Naive thymus-derived CD4-positive, alpha-beta T cell (primary cell): ENCODE measurements at regions of chr17 and their contacts with region 1.

Region 1: GRCh38 chr17:42248351-42249179 is 27.6 kb downstream of the STAT5B start:
- DNase-seq: peak; percentile 47 to 95 (median 90)
- ATAC-seq: peak; percentile 93
- H3K4me3 ChIP-seq: peak overlapping the region; percentile 66
- H3K4me3 Mint-ChIP-seq: peak overlapping the region; percentile 83 to 99 (median 90)
- H3K27ac ChIP-seq: peak overlapping the region; percentile 97
- H3K27ac Mint-ChIP-seq: peak overlapping the region; percentile 97 to 99 (median 99)
- H3K4me1 ChIP-seq: peaks cover 43 to 52% of the 10 kb centered on the region in 2 donors
- H3K4me1 Mint-ChIP-seq: peaks cover 50 to 83% (median 74%) of the 10 kb centered on the region in 7 donors
- H3K27me3 ChIP-seq: no peaks in the 10 kb centered on the region
- H3K27me3 Mint-ChIP-seq: no peaks in the 10 kb centered on the region

Region 2: DNA sequence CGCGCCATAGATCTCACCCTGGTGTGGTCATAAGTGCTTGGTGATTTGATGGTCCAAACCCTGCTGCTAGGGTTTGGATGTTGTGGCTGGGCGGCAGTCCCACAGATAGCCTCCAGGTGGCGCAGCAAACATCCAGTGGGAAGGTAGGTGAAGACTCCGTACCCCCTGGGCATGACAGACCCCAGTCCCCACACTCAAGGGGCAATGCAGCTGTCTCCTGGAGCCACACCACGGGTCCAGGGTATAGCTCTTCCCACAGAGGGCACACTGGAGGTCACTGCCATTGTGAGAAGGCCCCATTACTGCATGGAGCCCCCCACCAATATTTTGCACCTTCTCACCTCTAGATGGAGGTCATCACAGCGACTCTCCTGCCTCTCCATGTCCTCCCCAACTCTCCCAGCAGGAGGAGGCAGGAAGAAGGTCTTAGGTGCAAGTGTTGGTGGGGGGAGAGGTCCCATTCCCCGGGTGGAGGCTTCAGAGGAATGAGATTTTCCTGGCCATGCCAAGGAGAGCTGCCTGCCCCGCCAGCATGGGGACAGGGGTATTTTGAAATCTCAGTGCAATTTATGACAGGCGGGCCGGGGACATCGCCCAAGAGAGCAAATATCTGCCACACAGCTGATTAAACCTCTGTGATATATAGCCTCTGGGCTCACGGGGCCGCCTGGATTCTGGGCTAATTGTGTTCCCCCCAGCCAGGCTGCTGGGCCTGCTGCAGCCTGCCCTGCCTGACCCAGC is 181.0 kb before region 1 on chr17:
- CTCF ChIA-PET with region 1: no interaction called
- POLR2A ChIA-PET with region 1: no interaction called
- intact Hi-C with region 1: no loop called
- DNase-seq: peak; percentile 31 to 72 (median 58)
- ATAC-seq: peak; percentile 63
- H3K4me3 ChIP-seq: no peak overlapping the region
- H3K4me3 Mint-ChIP-seq: no peak overlapping the region
- H3K27ac ChIP-seq: no peak overlapping the region
- H3K27ac Mint-ChIP-seq: peak overlapping the region in 1 of 9 donors; percentile 36
- H3K4me1 ChIP-seq: peaks cover 7 to 30% of the 10 kb centered on the region in 2 donors
- H3K4me1 Mint-ChIP-seq: peaks cover 9 to 30% (median 23%) of the 10 kb centered on the region in 7 donors
- H3K27me3 ChIP-seq: peaks cover 0 to 2% of the 10 kb centered on the region in 2 donors
- H3K27me3 Mint-ChIP-seq: peaks cover 4 to 21% (median 11%) of the 10 kb centered on the region in 5 donors

Region 3: GRCh38 chr17:42153919-42154742 is 94.4 kb before region 1 on chr17:
- CTCF ChIA-PET with region 1: no interaction called
- POLR2A ChIA-PET with region 1: interaction called, 3 read pairs
- intact Hi-C with region 1: loop called in 1 of 2 experiments (anchors 1 kb)
- DNase-seq: no peak
- ATAC-seq: no peak
- H3K4me3 ChIP-seq: peak overlapping the region; percentile 76
- H3K4me3 Mint-ChIP-seq: peak overlapping the region; percentile 81 to 97 (median 94)
- H3K27ac ChIP-seq: peak overlapping the region; percentile 94
- H3K27ac Mint-ChIP-seq: peak overlapping the region; percentile 79 to 96 (median 93)
- H3K4me1 ChIP-seq: peaks cover 10 to 16% of the 10 kb centered on the region in 2 donors
- H3K4me1 Mint-ChIP-seq: peaks cover 21 to 43% (median 37%) of the 10 kb centered on the region in 7 donors
- H3K27me3 ChIP-seq: no peaks in the 10 kb centered on the region
- H3K27me3 Mint-ChIP-seq: no peaks in the 10 kb centered on the region

Region 4: DNA sequence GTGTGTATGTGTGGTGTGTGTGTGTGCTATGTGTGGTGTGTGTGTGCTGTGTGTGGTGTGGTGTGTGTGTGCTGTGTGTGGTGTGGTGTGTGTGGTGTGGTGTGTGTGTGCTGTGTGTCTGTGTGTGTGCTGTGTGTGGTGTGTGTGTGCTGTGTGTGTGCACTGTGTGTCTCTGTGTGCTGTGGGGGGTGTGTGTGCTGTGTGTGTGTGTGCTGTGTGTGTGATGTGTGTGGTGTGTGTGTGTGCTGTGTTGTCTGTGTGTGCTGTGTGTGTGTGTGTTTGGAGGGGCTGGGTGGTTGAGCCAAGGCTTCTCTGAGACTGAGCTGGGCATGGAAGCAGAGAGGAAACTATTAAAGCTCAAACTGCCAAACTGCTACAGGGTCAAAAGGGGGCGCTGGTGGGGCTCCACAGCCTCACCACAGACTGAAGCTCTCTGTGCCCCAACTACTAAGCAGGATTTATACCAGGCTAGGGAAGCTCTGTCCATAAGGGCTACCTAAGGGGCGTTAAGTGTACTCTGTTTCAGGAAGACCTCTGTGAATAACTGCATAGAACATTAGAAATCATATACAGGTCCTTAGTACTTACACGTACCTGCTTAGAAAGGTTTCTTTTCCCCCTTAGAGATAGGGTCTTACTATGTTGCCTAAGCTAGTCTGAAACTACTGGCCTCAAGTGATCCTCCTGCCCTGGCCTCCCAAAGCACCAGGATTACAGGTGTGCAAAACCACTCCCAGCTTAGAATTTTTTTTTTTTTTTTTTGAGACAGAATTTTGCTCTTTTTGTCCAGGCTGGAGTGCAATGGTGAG is 26.4 kb before region 1 on chr17:
- CTCF ChIA-PET with region 1: interaction called, 24 read pairs
- POLR2A ChIA-PET with region 1: interaction called, 13 read pairs
- intact Hi-C with region 1: loop called in 1 of 2 experiments (anchors 1 kb)
- DNase-seq: peak; percentile 39 to 80 (median 71)
- ATAC-seq: peak; percentile 95
- H3K4me3 ChIP-seq: no peak overlapping the region
- H3K4me3 Mint-ChIP-seq: no peak overlapping the region
- H3K27ac ChIP-seq: no peak overlapping the region
- H3K27ac Mint-ChIP-seq: peak overlapping the region in 8 of 9 donors; percentile 53 to 88 (median 70)
- H3K4me1 ChIP-seq: peaks cover 0 to 5% of the 10 kb centered on the region in 2 donors
- H3K4me1 Mint-ChIP-seq: peaks cover 0 to 9% (median 6%) of the 10 kb centered on the region in 7 donors
- H3K27me3 ChIP-seq: no peaks in the 10 kb centered on the region
- H3K27me3 Mint-ChIP-seq: no peaks in the 10 kb centered on the region

Region 5: DNA sequence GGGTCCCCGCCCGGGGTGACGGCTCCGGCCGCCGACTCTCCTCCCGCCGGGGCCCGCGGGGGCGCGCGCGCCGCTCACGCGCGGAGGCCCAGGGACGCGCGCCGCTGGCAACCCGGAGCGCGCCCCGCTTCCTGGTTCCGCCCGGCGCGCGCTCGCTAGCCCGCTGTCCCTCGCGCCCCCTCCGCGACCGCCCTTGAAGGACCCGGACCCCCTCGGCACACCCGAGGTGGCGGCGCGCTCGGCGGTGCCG is 27.7 kb after region 1 on chr17 and contains the start of gene STAT5B:
- CTCF ChIA-PET with region 1: interaction called, 18 read pairs
- POLR2A ChIA-PET with region 1: interaction called, 321 read pairs
- intact Hi-C with region 1: loop called (anchors 1 kb)
- DNase-seq: peak in 8 of 9 donors; percentile 52 to 82 (median 73)
- ATAC-seq: peak; percentile 84
- H3K4me3 ChIP-seq: peak within 1 kb of the TSS; percentile 93
- H3K4me3 Mint-ChIP-seq: peak within 1 kb of the TSS; percentile 95 to 100 (median 98)
- H3K27ac ChIP-seq: peak within 1 kb of the TSS; percentile 90
- H3K27ac Mint-ChIP-seq: peak within 1 kb of the TSS; percentile 91 to 99 (median 97)
- H3K4me1 ChIP-seq: peaks cover 30 to 32% of the 10 kb centered on the region in 2 donors
- H3K4me1 Mint-ChIP-seq: peaks cover 34 to 56% (median 50%) of the 10 kb centered on the region in 7 donors
- H3K27me3 ChIP-seq: no peaks in the 10 kb centered on the region
- H3K27me3 Mint-ChIP-seq: no peaks in the 10 kb centered on the region
- total RNA-seq, gene STAT5B: 143 to 192 (median 183) TPM

Region 6: DNA sequence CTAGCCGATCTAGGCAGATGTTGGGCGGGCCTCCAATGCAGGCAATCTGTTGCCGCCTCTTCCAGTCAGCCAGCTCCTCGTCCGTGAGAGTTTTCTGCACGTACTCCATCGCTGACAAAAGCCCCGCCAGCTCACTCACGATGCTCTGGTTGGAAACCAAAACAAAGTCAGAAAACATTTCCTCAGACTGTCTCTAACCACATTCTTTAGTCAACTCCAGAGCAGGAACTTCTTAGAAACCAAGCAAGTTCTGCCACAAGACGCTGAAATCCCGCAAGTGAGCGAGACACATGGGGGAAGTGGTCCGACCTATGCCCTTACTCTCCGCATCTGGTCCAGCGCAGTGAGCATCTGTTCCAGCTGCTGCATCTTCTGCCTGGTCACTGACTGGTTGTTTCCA is 88.9 kb after region 1 on chr17:
- CTCF ChIA-PET with region 1: interaction called, 3 read pairs
- POLR2A ChIA-PET with region 1: no interaction called
- intact Hi-C with region 1: loop called in 1 of 2 experiments (anchors 1 kb)
- DNase-seq: peak; percentile 23 to 87 (median 80)
- ATAC-seq: peak; percentile 92
- H3K4me3 ChIP-seq: no peak overlapping the region
- H3K4me3 Mint-ChIP-seq: peak overlapping the region; percentile 52 to 84 (median 72)
- H3K27ac ChIP-seq: peak overlapping the region; percentile 77
- H3K27ac Mint-ChIP-seq: peak overlapping the region; percentile 85 to 98 (median 93)
- H3K4me1 ChIP-seq: peaks cover 11 to 29% of the 10 kb centered on the region in 2 donors
- H3K4me1 Mint-ChIP-seq: peaks cover 18 to 73% (median 38%) of the 10 kb centered on the region in 7 donors
- H3K27me3 ChIP-seq: no peaks in the 10 kb centered on the region
- H3K27me3 Mint-ChIP-seq: no peaks in the 10 kb centered on the region

Region 7: DNA sequence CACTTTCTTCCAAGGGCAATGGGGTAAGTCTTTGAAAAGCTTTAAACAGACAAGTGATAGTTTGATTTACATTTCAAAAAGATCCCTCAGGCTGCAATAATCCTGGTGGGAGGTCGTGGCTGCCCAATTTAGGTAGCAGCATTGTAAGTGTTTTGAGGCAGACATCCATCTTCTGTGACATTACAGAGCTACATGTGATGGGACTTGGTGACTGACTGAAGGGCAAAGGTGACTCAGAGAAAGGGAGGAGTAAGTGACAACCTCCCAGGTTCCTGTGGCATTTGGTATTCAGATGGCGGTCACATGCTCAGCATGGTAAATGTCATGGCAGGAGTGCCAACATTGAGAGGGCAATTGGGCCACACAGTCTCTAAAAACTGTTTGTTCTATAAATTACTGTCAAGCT is 113.2 kb after region 1 on chr17:
- CTCF ChIA-PET with region 1: no interaction called
- POLR2A ChIA-PET with region 1: no interaction called
- intact Hi-C with region 1: no loop called
- DNase-seq: peak in 1 of 9 donors; percentile 32
- ATAC-seq: peak; percentile 71
- H3K4me3 ChIP-seq: no peak overlapping the region
- H3K4me3 Mint-ChIP-seq: peak overlapping the region in 4 of 10 donors; percentile 3 to 45 (median 23)
- H3K27ac ChIP-seq: no peak overlapping the region
- H3K27ac Mint-ChIP-seq: peak overlapping the region in 8 of 9 donors; percentile 12 to 80 (median 46)
- H3K4me1 ChIP-seq: peaks cover 34 to 38% of the 10 kb centered on the region in 2 donors
- H3K4me1 Mint-ChIP-seq: peaks cover 47 to 83% (median 72%) of the 10 kb centered on the region in 7 donors
- H3K27me3 ChIP-seq: no peaks in the 10 kb centered on the region
- H3K27me3 Mint-ChIP-seq: no peaks in the 10 kb centered on the region